ENCODE measurements at regions of chr1 and their contacts with region 1.

Region 1: GRCh38 chr1:78004719-78005447 is at the start of gene DNAJB4:
- DNase-seq: peak; percentile 86
- ATAC-seq: peak; percentile 98
- H3K4me3 Mint-ChIP-seq: peak within 1 kb of the TSS; percentile 93
- H3K27ac Mint-ChIP-seq: peak within 1 kb of the TSS; percentile 94
- H3K4me1 Mint-ChIP-seq: peaks cover 35% of the 10 kb centered on the region
- H3K27me3 Mint-ChIP-seq: no peaks in the 10 kb centered on the region
- total RNA-seq, gene DNAJB4: 9.4 to 10.5 TPM

Region 2: GRCh38 chr1:77683160-77684148 is 321.4 kb before region 1 on chr1:
- CTCF ChIA-PET with region 1: no interaction called
- POLR2A ChIA-PET with region 1: interaction called, 16 read pairs
- DNase-seq: peak; percentile 94
- ATAC-seq: peak; percentile 78
- H3K4me3 Mint-ChIP-seq: peak overlapping the region; percentile 81
- H3K27ac Mint-ChIP-seq: peak overlapping the region; percentile 91
- H3K4me1 Mint-ChIP-seq: peaks cover 25% of the 10 kb centered on the region
- H3K27me3 Mint-ChIP-seq: no peaks in the 10 kb centered on the region

Region 3: GRCh38 chr1:77978969-77979876 is 25.7 kb before region 1 on chr1 and contains the start of gene FUBP1:
- CTCF ChIA-PET with region 1: interaction called, 60 read pairs
- POLR2A ChIA-PET with region 1: interaction called, 317 read pairs
- DNase-seq: peak; percentile 98
- ATAC-seq: peak; percentile 84
- H3K4me3 Mint-ChIP-seq: no peak within 1 kb of the TSS
- H3K27ac Mint-ChIP-seq: no peak within 1 kb of the TSS
- H3K4me1 Mint-ChIP-seq: peaks cover 45% of the 10 kb centered on the region
- H3K27me3 Mint-ChIP-seq: no peaks in the 10 kb centered on the region
- total RNA-seq, gene FUBP1: 195 to 197 TPM

Region 4: DNA sequence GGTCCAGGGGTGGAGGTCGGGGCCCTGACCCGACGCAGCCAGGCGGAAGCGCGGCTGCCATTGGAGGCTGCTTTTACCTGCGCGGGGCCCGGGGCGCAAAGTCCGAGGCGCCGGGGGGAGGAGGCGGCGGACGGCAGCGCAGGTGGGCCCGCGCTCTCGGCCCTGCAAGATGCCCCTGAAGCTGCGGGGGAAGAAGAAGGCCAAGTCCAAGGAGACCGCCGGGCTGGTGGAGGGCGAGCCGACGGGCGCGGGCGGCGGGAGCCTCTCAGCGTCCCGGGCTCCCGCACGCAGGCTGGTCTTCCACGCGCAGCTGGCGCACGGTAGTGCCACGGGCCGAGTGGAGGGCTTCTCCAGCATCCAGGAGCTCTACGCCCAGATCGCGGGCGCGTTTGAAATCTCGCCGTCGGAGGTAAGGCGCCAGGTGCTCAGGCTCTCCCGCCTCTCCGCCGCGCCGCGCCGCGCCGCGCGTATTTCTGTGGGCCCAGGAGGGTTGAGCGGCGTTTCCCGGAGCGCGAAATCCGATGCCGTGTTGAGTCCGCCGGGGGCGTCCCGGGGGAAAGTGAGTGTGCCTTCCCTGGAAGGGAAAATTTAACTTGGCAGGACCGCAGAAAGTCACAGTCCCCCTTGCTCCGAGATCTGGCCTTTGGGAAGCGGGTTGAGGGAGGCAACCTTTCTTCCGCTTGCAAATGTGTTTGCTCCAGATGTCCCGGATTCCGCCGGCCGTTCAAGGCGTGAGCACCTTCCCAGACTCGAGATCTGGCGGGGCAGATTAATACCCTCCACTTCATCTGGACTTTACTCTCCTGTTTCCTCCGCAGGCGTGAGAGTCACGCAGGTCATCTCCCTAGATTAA is 41.3 kb after region 1 on chr1 and contains the start of gene GIPC2:
- CTCF ChIA-PET with region 1: interaction called, 5 read pairs
- POLR2A ChIA-PET with region 1: interaction called, 23 read pairs
- DNase-seq: peak; percentile 36
- ATAC-seq: peak; percentile 73
- H3K4me3 Mint-ChIP-seq: peak within 1 kb of the TSS; percentile 76
- H3K27ac Mint-ChIP-seq: no peak within 1 kb of the TSS
- H3K4me1 Mint-ChIP-seq: peaks cover 30% of the 10 kb centered on the region
- H3K27me3 Mint-ChIP-seq: peaks cover 26% of the 10 kb centered on the region
- total RNA-seq, gene GIPC2: 0.34 to 0.37 TPM

Region 5: GRCh38 chr1:78145105-78145580 is 140.3 kb after region 1 on chr1:
- CTCF ChIA-PET with region 1: no interaction called
- POLR2A ChIA-PET with region 1: interaction called, 11 read pairs
- DNase-seq: peak; percentile 53
- ATAC-seq: peak; percentile 38
- H3K4me3 Mint-ChIP-seq: no peak overlapping the region
- H3K27ac Mint-ChIP-seq: no peak overlapping the region
- H3K4me1 Mint-ChIP-seq: peaks cover 17% of the 10 kb centered on the region
- H3K27me3 Mint-ChIP-seq: peaks cover 15% of the 10 kb centered on the region